ENCODE measurements at regions of chr11 and their contacts with region 1.

Region 1: GRCh38 chr11:31509429-31510345 is at the starts of genes ELP4 and IMMP1L:
- DNase-seq: peak; percentile 94
- H3K4me3 Mint-ChIP-seq: peak within 1 kb of the TSS; percentile 99
- H3K27ac Mint-ChIP-seq: peak within 1 kb of the TSS; percentile 94
- H3K4me1 Mint-ChIP-seq: peaks cover 47% of the 10 kb centered on the region
- H3K27me3 Mint-ChIP-seq: no peaks in the 10 kb centered on the region
- total RNA-seq, gene ELP4: 15.1 and 17.3 TPM in 2 replicates
- total RNA-seq, gene IMMP1L: 22.3 and 24.6 TPM in 2 replicates

Region 2: DNA sequence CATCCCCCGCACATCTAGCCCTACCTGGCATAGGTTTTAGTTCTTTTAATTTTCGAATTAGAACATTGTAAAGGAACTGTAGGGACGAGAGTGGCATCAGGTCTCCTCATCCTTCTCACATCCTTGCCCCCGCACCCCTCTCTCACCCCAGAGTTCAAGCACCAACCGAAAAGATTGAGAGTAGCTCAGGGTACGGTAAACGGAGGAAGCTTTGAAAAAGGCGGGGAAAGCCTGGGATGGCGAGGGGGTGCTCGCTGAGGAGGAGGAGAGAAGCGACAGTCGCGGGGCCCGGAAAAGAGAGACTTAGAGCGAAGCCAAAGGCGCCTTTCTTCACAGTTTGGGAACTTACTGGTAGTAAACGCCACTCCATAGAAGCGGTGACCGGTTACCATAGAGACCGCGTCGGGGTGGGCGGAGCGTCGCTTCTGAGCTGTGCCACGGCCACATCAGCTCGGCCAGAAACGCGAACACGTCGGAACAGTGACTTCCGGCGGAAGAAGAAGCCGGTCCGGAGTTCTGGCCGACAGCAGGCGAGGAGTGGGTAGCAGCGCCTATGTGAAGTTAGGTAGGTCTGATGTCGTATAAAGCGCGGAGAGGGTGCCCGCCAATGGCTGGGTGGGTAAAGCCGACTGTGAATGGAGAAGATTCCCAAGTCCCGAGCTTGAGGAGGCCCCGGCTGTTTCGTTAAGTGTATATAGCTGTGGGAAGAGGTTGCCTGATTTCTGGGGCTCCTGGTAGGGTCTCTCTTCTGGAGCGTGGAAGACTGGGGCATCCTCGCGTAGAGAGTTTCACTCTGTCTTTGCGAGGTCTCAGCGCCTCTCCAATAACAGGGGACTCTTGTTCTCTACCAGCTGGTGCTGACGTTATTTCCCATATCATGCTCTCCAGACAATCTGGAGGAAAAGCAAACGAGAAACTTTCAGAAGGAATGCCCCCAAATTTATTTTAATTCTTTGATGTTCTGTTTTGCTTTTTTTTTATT is 140.0 kb before region 1 on chr11 and contains the starts of genes DCDC1 and DNAJC24:
- intact Hi-C with region 1: loop called (anchors 1 kb)
- DNase-seq: peak; percentile 89
- H3K4me3 Mint-ChIP-seq: peak within 1 kb of the TSS; percentile 99
- H3K27ac Mint-ChIP-seq: peak within 1 kb of the TSS; percentile 95
- H3K4me1 Mint-ChIP-seq: peaks cover 25% of the 10 kb centered on the region
- H3K27me3 Mint-ChIP-seq: peaks cover 7% of the 10 kb centered on the region
- total RNA-seq, gene DCDC1: not detected in 2 replicates
- total RNA-seq, gene DNAJC24: 15.8 and 20.6 TPM in 2 replicates

Region 3: DNA sequence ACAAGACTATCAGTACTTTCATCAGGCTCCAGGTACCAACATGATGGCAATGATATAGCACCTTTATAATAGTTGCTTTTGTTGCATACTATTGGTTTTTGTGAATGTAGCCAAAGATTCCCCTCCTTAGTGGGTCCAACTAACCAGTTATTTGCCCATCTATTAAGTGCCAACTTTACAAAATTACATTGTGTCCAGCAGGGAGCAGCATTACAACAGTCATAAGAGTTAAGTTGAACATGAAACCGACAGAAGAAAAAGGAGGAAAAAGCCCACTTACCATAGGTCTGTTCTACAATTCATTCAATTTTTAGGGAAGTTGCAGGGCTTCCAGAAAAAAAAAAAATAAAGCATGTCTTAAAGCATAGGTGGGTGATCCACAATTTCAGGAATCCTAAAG is 21.8 kb before region 1 on chr11:
- intact Hi-C with region 1: no loop called
- DNase-seq: no peak
- H3K4me3 Mint-ChIP-seq: no peak overlapping the region
- H3K27ac Mint-ChIP-seq: no peak overlapping the region
- H3K4me1 Mint-ChIP-seq: peaks cover 6% of the 10 kb centered on the region
- H3K27me3 Mint-ChIP-seq: no peaks in the 10 kb centered on the region

Region 4: DNA sequence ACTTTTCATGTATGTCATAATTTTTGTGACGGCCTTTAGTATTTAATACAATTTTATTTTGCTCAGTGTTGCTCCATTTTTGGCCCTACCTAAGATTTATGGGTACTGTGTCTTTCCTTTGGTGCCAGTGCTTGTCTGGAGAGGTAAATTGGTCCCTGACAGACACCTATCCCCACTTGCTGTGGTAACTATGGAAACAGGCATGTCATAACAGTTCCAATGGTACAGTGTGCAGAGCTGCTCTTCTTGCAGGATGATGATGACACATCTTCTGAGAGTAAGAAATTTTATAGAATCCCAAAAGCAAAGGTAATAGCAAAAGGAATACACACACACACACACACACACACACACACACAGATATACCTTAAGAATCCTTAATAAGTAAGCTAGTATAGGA is 118.4 kb after region 1 on chr11:
- intact Hi-C with region 1: no loop called
- DNase-seq: no peak
- H3K4me3 Mint-ChIP-seq: no peak overlapping the region
- H3K27ac Mint-ChIP-seq: no peak overlapping the region
- H3K4me1 Mint-ChIP-seq: no peaks in the 10 kb centered on the region
- H3K27me3 Mint-ChIP-seq: no peaks in the 10 kb centered on the region

Measured in activated T-helper 1 cell treated with anti-CD3 and anti-CD28 coated beads, Interleukin-12 subunit alpha, Interleukin-12 subunit beta, Interleukin-2, Interleukin-4 antibody, amounts not matched to agents 30 ng/mL and 10 ng/mL and 1 ng/mL, durations not matched to agents 14 hours and 24 hours and 36 hours (primary cell).